ENCODE measurements at regions of chr22 and their contacts with region 1.

Region 1: DNA sequence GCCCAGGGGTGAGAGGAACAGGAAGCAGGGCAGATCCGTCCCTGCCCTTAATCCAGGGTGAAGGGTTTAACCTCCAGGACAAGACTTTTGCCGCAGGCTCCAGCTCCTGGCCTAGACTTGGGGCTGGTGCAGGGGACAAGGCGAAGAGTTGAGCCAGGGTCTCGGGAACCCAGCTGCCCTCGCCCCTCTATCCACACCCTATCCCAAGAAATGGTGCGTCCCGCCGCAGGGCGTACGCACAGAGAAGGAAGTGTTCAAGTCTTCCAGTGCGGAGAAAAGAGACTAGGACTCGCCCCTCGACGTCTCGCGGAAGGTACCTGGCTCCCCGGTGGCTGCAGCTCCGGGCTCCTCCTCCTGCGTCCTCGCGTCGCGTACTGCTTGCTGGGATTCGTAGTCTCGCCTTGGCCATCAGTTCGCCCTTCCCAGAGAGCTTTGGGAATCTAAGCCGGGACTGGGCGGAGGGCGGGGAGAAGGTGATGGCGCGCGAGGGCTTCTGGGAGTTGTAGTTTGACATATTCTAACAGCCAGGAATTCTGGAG is at the start of gene ZMAT5:
- DNase-seq: peak; percentile 94
- ATAC-seq: peak; percentile 96
- H3K4me3 ChIP-seq: peak within 1 kb of the TSS; percentile 100
- H3K27ac ChIP-seq: peak within 1 kb of the TSS; percentile 79
- H3K4me1 ChIP-seq: peaks cover 9% of the 10 kb centered on the region; the same call in 1 of the 2 replicates
- H3K27me3 ChIP-seq: no peaks in the 10 kb centered on the region
- CTCF ChIP-seq: no peak
- total RNA-seq, gene ZMAT5: 24.2 and 37.7 TPM in 2 replicates

Region 2: DNA sequence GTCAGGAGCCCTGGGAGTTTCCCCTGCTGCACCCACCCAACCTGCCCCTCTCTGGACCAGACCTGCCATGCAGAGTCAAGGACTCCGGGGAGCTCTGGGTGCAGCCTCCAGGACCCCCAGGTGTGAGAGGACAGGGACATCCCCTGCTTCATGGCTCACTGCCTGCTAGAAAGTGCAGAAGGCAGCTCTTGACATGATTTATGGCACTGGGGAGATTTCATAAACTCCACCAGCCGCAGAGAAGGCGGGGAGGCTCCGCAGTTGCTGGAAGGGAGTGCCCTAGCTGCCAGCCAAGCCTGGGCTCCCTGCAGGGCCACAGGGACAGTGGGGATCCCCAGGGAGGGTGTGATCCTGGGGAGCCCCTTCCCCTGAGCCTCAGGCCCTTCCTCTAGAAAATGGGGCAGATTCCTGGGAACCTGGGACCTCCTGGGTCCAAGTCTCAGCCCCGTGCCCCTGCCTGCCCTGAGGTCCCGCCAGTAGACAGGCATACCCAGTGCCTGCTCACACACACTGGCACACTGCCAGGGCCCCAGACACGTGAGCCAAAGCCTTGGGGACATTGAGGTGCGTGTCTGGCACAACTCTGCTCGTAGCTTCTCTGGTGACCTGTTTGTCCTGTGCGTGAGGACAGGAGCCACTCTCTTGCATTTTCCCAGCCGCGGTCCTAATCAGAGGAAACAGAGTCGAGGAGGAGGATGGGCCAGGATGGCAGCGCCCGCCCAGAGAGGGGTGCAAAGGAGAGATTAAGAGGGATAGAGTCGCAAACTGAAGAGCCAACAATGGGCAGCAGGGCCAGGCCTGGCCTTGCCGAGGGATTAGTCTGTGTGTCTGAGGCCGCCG is 33.1 kb before region 1 on chr22:
- CTCF ChIA-PET with region 1: no interaction called
- POLR2A ChIA-PET with region 1: interaction called, 10 read pairs
- intact Hi-C with region 1: no loop called
- DNase-seq: no peak
- ATAC-seq: no peak
- H3K4me3 ChIP-seq: no peak overlapping the region
- H3K27ac ChIP-seq: no peak overlapping the region
- H3K4me1 ChIP-seq: no peaks in the 10 kb centered on the region
- H3K27me3 ChIP-seq: no peaks in the 10 kb centered on the region
- CTCF ChIP-seq: no peak

Region 3: GRCh38 chr22:29750559-29751538 is 15.9 kb before region 1 on chr22:
- CTCF ChIA-PET with region 1: no interaction called
- POLR2A ChIA-PET with region 1: no interaction called
- intact Hi-C with region 1: no loop called
- DNase-seq: no peak
- ATAC-seq: no peak
- H3K4me3 ChIP-seq: no peak overlapping the region
- H3K27ac ChIP-seq: no peak overlapping the region
- H3K4me1 ChIP-seq: no peaks in the 10 kb centered on the region
- H3K27me3 ChIP-seq: no peaks in the 10 kb centered on the region
- CTCF ChIP-seq: no peak

Measured in PC-3 (cell line).